Mammary epithelial cell (primary cell): ENCODE measurements at regions of chr3 and their contacts with region 1.

Region 1: GRCh38 chr3:151146071-151146730 is 56.8 kb downstream of the GPR171 start:
- DNase-seq: peak; percentile 61
- H3K4me3 ChIP-seq: no peak overlapping the region
- H3K27ac ChIP-seq: no peak overlapping the region
- H3K4me1 ChIP-seq: peaks cover 11% of the 10 kb centered on the region
- H3K27me3 ChIP-seq: peaks cover 4% of the 10 kb centered on the region
- CTCF ChIP-seq: peak; percentile 89 to 93

Region 2: GRCh38 chr3:150721285-150722130 is 424.7 kb before region 1 on chr3:
- CTCF ChIA-PET with region 1: no interaction called
- dilution Hi-C with region 1: no loop called
- in situ Hi-C with region 1: loop called in 1 of 2 experiments (anchors 10 kb)
- intact Hi-C with region 1: loop called (anchors 1 kb)
- DNase-seq: peak; percentile 51
- H3K4me3 ChIP-seq: no peak overlapping the region
- H3K27ac ChIP-seq: no peak overlapping the region
- H3K4me1 ChIP-seq: peaks cover 4% of the 10 kb centered on the region
- H3K27me3 ChIP-seq: no peaks in the 10 kb centered on the region
- CTCF ChIP-seq: peak; percentile 73 to 91

Region 3: GRCh38 chr3:150870396-150870795 is 275.8 kb before region 1 on chr3:
- CTCF ChIA-PET with region 1: no interaction called
- dilution Hi-C with region 1: no loop called
- in situ Hi-C with region 1: no loop called
- intact Hi-C with region 1: loop called (anchors 1 kb)
- DNase-seq: no peak
- H3K4me3 ChIP-seq: no peak overlapping the region
- H3K27ac ChIP-seq: no peak overlapping the region
- H3K4me1 ChIP-seq: no peaks in the 10 kb centered on the region
- H3K27me3 ChIP-seq: peaks cover 3% of the 10 kb centered on the region
- CTCF ChIP-seq: no peak

Region 4: DNA sequence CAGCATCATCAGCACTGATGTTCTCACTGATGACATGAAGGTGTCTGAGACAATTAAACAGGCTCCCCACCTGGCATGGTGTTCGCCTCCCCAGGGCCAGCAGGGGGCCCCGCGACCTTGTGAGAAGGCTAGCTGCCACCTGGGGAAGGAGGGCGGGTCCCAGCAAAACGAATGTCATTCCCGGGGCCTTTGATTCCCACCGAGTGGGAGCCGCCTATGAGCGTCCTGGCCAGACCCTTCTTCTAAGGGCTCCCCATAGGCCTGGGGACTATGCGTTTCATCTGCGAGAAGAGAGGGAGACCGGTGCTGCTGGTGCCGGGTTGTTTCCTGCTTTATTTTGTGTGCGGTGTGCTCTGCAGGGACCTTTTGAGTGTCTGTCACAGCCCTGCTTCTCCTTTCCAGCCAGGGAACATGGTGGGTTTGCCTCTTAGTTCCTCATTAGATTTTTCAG is 220.4 kb before region 1 on chr3:
- CTCF ChIA-PET with region 1: no interaction called
- dilution Hi-C with region 1: no loop called
- in situ Hi-C with region 1: loop called (anchors 10 to 25 kb)
- intact Hi-C with region 1: loop called (anchors 1 kb)
- DNase-seq: peak; percentile 19
- H3K4me3 ChIP-seq: no peak overlapping the region
- H3K27ac ChIP-seq: no peak overlapping the region
- H3K4me1 ChIP-seq: no peaks in the 10 kb centered on the region
- H3K27me3 ChIP-seq: peaks cover 7% of the 10 kb centered on the region
- CTCF ChIP-seq: peak; percentile 73 to 82

Region 5: DNA sequence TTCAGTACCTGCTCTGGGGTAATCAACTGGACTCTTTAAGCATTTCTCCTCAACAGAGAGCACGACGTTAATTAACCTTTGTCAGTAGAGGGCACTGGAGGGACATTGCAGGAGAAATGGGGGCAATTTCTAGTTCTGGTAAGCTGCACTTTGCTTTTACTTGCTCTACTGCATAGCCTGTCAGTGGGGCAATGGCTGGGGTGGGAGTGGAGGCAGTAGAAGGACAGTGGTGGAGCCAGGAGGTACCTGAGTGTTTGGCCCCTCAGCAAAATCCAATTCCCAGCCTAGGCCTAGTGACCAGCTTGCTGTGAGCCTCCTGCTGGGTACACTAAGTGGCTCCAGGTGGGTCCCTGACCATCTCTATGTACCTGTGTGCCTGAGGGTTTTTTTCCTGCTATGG is 79.0 kb before region 1 on chr3:
- CTCF ChIA-PET with region 1: no interaction called
- dilution Hi-C with region 1: no loop called
- in situ Hi-C with region 1: no loop called
- intact Hi-C with region 1: loop called (anchors 1 kb)
- DNase-seq: no peak
- H3K4me3 ChIP-seq: no peak overlapping the region
- H3K27ac ChIP-seq: no peak overlapping the region
- H3K4me1 ChIP-seq: no peaks in the 10 kb centered on the region
- H3K27me3 ChIP-seq: peaks cover 3% of the 10 kb centered on the region
- CTCF ChIP-seq: no peak